ENCODE measurements at regions of chr13 and their contacts with region 1.

Region 1: DNA sequence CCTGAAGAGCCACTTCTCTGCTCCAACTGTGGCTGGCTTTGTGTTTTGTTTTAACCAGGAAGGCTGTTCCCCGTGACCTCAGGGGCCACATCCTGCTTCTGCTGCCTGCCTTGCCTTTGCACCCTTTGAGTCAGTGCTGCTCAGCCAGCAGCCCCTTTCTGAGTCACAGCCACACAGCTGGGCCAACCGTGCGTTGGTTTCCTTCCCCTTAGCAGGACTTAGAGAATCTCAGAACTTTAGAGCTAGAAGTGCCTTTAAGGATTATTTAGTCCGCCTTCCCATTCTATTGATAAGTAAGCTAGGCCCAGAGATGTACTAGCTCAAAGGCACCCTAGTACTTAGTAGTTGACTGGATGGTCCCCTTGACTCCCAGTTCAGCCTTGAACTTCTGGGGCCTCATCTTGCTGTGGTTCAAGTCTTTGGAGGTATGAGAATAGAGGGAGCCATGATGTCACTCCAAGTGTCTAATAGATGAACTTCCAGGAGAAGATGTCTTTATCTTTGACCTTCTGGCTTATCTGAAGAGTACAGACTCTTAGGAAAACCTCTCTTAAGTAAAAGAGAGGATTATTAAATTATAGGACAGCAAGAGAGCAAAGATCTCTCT is 8.0 kb downstream of the RGCC start:
- DNase-seq: peak; percentile 94
- H3K4me3 Mint-ChIP-seq: peak overlapping the region; percentile 69
- H3K27ac Mint-ChIP-seq: peak overlapping the region; percentile 94
- H3K4me1 Mint-ChIP-seq: peaks cover 84% of the 10 kb centered on the region
- H3K27me3 Mint-ChIP-seq: no peaks in the 10 kb centered on the region

Region 2: GRCh38 chr13:41356786-41357185 is 108.6 kb before region 1 on chr13:
- CTCF ChIA-PET with region 1: interaction called, 5 read pairs
- POLR2A ChIA-PET with region 1: interaction called, 10 read pairs
- DNase-seq: peak; percentile 41
- H3K4me3 Mint-ChIP-seq: peak overlapping the region; percentile 68
- H3K27ac Mint-ChIP-seq: peak overlapping the region; percentile 98
- H3K4me1 Mint-ChIP-seq: peaks cover 55% of the 10 kb centered on the region
- H3K27me3 Mint-ChIP-seq: no peaks in the 10 kb centered on the region

Region 3: DNA sequence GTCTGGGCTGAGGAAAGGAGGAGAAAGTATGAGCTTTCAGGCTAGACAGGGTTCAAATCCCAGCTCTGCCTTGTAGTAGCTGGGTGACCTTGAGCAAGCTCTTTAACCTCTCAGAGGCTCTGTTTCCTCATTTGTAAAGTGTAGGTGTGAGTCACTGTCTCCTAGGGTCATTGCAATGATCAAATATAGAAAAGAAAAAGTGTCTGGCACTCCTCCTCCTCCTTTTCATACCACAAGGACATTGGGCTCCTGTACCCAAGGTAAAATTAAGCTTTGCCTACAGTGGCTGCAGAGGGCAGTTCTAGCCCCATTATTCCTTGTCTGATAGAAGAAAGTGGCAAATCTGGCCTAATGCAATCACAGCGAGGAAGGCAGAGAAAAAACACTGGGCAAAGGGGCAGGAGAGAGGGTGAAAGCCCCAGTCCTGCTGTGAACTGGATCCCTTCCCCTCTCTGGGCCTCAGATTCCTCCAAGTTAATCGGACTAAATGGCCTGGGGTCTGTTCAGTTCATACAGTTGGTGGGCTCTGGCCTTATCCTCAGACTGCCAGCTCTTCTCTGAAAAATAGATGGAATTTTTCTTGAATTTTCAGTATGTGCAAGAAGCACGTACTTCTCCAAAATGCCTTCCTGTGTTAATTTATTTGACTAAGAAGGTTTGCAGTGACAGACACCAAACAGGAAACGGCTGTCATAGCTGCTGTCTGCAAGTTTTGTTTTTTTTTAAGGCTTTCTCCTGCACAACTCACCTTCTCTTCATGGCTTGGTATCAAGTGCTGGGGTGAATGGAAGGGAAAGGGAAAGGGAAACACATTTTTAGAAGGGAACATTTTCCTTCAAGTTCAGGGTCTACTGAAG is 27.3 kb after region 1 on chr13:
- CTCF ChIA-PET with region 1: interaction called, 8 read pairs
- POLR2A ChIA-PET with region 1: interaction called, 52 read pairs
- DNase-seq: peak; percentile 27
- H3K4me3 Mint-ChIP-seq: peak overlapping the region; percentile 15
- H3K27ac Mint-ChIP-seq: peak overlapping the region; percentile 92
- H3K4me1 Mint-ChIP-seq: peaks cover 49% of the 10 kb centered on the region
- H3K27me3 Mint-ChIP-seq: no peaks in the 10 kb centered on the region

Region 4: DNA sequence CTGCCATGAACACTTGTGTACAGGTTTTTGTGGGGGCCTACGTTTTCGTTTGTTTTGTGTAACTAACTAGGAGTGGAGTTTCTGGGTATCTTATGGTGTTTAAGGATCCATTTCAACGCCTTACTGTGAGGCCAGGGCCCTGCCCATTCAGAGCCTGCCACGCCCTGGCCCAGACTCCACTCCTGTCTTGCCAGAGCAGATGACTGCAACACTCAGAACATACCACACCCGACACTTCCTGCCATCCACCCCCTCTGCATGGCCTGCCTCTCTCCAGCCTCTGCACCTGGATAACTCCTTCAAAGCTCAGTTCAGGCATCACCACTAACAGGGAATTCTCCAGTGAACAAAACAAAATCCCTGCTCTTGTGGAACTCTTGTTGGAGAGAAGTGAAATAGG is 35.2 kb after region 1 on chr13:
- CTCF ChIA-PET with region 1: interaction called, 6 read pairs
- POLR2A ChIA-PET with region 1: interaction called, 52 read pairs
- DNase-seq: peak; percentile 69
- H3K4me3 Mint-ChIP-seq: no peak overlapping the region
- H3K27ac Mint-ChIP-seq: peak overlapping the region; percentile 63
- H3K4me1 Mint-ChIP-seq: peaks cover 49% of the 10 kb centered on the region
- H3K27me3 Mint-ChIP-seq: no peaks in the 10 kb centered on the region